Posterior vena cava (tissue), 2 donors: ENCODE measurements at regions of chr10 and their contacts with region 1.

Region 1: DNA sequence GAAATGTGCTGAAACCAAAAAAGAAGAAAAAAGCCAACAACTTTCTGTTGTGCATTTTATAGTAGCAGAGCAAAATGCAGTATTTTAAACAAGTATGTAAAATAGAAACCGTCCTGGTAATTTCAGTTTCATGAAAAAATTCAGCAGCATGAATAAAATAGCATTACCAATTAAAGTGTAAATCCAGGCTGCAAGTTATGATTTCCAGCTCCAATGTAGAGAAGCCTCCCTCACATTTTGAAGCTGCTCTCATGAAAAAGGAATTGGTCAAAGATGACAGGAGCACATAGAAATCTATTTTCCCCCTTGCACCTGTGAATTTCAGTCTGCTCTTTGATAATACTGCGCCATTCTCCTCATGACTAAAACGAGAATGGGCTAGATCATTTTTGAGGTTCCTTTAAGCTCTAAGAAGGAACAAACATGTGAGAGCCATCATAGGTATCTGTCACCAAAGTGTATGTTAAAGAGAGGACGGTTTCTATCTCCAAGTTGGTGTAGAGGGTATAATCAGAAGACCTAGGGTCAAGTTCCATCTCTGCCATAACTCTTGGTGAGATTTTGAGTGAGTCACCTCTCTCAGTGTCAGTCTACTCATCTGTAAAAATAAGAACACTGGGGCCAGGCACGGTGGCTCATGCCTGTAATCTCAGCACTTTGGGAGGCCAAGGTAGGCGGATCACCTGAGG is 107.5 kb downstream of the MTPAP start:
- DNase-seq: no peak

Region 2: DNA sequence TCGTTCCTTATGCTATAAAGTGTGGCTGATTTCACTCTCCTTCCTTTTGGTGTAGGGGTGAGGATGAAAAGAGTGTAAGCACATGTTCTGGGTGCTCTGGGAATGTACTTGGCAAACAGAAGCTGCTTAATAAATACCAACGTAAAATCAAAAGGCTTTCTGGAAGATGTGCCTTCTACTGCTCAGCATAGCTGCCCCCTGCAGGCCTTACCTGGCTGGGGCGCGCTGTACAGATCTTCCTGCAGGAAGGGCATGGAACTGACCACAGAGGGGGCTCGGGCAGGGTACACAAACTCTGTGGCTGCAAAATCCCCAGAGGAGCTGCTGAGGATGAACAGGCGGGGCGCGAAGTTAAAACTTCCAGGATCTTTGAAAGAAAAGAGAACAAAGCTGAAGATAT is 776.2 kb before region 1 on chr10:
- intact Hi-C with region 1: no loop called
- DNase-seq: no peak

Region 3: GRCh38 chr10:29998142-29998808 is 243.3 kb before region 1 on chr10:
- intact Hi-C with region 1: loop called (anchors 2 kb)
- DNase-seq: peak; percentile 88